ENCODE measurements at regions of chr6 and their contacts with region 1.

Region 1: GRCh38 chr6:138509371-138509770 is 10.1 kb upstream of the NHSL1 start:
- H3K4me3 ChIP-seq: no peak overlapping the region
- H3K27ac ChIP-seq: no peak overlapping the region
- H3K4me1 ChIP-seq: peaks cover 4% of the 10 kb centered on the region; the same call in 1 of the 2 replicates
- CTCF ChIP-seq: peak; percentile 56; the same call in 1 of the 2 replicates

Region 2: DNA sequence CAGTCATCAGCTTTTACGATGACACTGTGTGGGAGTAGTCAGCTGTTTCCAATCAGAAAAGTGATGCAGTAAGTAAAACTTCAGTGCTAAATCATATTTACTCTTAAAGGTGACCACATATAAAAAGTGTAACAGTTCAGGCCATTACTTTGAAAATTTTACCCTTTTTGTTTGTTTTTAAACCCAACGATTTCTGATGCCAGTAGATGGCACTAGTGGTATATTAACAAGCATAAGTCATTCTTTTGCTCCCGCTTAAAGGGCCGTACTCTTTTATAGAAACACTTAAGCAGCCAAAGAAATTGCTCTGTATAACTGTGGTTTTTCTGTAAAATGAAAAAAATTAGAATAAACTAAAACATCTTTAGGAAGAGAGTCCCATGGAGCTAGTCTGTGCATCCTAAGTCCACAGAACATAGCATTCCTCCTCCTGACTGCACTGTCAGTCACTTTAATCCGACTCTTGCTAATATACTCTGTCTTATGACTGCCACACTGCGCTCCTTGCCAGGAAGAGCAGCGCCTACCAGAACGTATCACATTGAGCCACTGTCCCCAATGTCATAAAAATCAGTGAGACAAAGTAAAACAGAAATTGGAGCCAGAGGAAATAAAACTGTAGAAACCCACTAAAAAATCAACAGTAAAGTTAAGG is 80.3 kb before region 1 on chr6:
- CTCF ChIA-PET with region 1: interaction called, 125 read pairs
- POLR2A ChIA-PET with region 1: no interaction called
- H3K4me3 ChIP-seq: no peak overlapping the region
- H3K27ac ChIP-seq: no peak overlapping the region
- H3K4me1 ChIP-seq: no peaks in the 10 kb centered on the region
- CTCF ChIP-seq: peak; percentile 39

Region 3: DNA sequence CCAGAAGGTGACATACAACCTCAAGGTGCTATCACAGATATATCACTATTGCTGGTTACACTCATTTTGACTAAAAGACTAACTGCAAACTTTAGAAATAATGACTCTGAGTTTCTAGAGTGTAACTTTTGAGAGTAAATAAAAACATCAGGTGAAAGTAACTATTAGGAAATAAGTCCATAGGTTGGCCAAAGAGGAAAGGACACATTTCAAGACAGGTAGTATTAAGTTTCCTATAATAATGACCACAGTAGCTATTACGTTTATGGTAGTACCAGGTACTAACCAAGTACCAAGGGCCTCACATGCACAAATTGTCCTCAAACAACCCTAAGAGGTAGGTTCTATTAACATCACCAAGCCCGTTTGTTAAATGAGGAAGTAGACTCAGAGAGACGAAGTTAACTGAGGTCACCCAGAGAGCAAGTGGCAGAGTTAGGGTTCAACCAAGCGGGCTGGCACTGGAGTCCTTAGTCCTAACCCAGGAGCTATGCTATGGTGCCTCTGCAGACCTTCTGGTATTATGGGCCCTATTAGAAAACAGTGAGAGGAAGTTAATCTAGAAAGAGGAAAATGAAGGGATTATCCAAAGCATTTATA is 68.5 kb before region 1 on chr6:
- CTCF ChIA-PET with region 1: interaction called, 17 read pairs
- POLR2A ChIA-PET with region 1: no interaction called
- H3K4me3 ChIP-seq: no peak overlapping the region
- H3K27ac ChIP-seq: no peak overlapping the region
- H3K4me1 ChIP-seq: no peaks in the 10 kb centered on the region
- CTCF ChIP-seq: no peak

Region 4: GRCh38 chr6:138450445-138450844 is 58.9 kb before region 1 on chr6:
- CTCF ChIA-PET with region 1: interaction called, 12 read pairs
- POLR2A ChIA-PET with region 1: no interaction called
- H3K4me3 ChIP-seq: no peak overlapping the region
- H3K27ac ChIP-seq: no peak overlapping the region
- H3K4me1 ChIP-seq: no peaks in the 10 kb centered on the region
- CTCF ChIP-seq: no peak

Region 5: DNA sequence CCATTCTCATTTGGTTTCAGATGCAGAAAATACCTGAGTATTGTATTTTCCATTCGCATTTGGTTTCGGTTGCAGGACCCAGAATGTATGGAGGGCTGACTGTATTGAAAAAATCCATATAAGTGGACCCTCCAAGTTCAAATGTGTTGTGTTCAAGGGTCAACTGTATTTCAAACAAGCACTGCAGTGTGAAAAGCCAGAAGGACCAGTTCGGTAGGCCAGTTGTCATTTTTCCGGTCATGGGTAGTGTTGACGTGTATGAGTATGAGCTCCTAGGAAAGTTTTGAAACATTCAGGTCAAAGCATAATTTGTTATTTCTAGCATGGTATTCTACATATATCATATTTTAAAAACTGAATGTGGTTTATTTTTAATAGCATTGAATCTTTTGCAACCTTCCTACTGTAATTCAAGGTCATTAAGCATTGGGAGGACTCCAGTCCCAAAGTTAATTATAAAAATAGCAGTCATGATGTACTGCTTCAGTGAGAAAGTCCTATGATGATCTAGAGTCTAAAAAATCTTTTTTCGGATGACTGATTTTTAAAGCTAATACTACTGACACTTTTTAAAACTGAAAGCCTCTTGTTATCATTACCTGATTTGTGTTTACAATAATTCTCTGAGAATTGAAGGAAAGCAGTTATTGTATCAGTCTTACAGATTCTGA is 29.0 kb before region 1 on chr6:
- CTCF ChIA-PET with region 1: interaction called, 11 read pairs
- POLR2A ChIA-PET with region 1: no interaction called
- H3K4me3 ChIP-seq: no peak overlapping the region
- H3K27ac ChIP-seq: no peak overlapping the region
- H3K4me1 ChIP-seq: peaks cover 13% of the 10 kb centered on the region
- CTCF ChIP-seq: no peak

Region 6: DNA sequence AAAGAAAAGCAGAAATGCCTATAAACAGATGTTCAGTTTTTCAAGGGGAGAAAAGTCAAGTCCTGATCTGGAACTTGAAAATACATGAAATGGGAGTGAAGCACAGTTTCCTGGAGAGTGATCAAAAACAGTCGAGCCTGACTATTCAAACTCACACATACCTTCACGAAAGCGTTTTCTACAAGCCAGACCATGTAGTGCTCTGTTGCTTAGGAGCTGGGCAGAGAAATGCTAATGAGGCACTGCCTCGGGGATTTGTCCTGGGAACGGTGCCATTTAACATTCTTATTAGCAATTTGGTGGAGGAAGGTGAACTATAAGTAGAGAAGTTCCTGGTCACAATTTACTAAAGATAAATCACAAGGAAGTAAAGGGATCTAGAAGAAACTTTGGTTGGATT is 16.0 kb before region 1 on chr6:
- CTCF ChIA-PET with region 1: interaction called, 43 read pairs
- POLR2A ChIA-PET with region 1: no interaction called
- H3K4me3 ChIP-seq: no peak overlapping the region
- H3K27ac ChIP-seq: no peak overlapping the region
- H3K4me1 ChIP-seq: peaks cover 31% of the 10 kb centered on the region
- CTCF ChIP-seq: no peak